ENCODE measurements at regions of chr7 and their contacts with region 1.

Region 1: GRCh38 chr7:16564909-16565426 is 38.3 kb downstream of the LRRC72 start:
- DNase-seq: peak; percentile 53
- H3K4me3 Mint-ChIP-seq: no peak overlapping the region
- H3K27ac Mint-ChIP-seq: no peak overlapping the region
- H3K4me1 Mint-ChIP-seq: no peaks in the 10 kb centered on the region
- H3K27me3 Mint-ChIP-seq: peaks cover 12% of the 10 kb centered on the region
- CTCF ChIP-seq: peak; percentile 54

Region 2: DNA sequence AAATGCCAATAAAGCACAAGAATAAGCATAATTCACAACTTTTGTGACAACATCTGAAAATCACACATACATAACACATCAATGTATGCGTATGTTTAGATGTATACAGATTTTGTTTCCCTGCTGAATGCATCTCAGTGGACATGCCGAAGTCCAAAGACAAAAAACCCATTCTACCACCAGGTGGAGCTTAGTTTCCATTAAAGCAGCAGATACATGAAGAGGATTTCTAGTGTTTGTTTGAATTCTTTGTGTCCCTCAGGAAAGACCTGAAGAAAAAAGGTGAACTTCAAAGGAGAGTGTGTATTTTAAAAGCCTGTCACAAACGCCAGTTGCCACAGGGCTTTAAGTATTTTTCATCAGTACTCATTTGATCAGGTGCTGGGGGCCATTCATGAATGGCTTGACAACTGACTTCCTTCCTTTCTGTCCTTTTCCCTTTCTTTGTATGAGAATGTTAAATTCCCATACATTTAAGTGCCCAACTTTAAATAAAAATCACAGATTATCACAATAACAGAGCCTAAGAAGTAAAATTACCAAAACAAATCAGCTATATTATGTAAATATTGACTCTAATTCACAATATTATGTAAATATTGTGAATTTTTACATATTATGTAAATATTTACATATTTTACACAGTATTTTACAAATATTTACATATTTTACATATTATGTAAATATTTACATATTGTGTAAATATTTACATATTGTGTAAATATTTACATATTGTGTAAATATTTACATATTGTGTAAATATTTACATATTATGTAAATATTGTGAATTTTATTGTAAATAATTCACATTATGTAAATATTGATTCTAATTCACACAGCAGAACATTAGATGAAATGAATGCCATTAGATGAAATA is 486.7 kb before region 1 on chr7:
- CTCF ChIA-PET with region 1: interaction called, 78 read pairs
- POLR2A ChIA-PET with region 1: interaction called, 6 read pairs
- intact Hi-C with region 1: loop called (anchors 1 kb)
- DNase-seq: peak; percentile 75
- H3K4me3 Mint-ChIP-seq: no peak overlapping the region
- H3K27ac Mint-ChIP-seq: no peak overlapping the region
- H3K4me1 Mint-ChIP-seq: peaks cover 11% of the 10 kb centered on the region
- H3K27me3 Mint-ChIP-seq: no peaks in the 10 kb centered on the region
- CTCF ChIP-seq: peak; percentile 56

Region 3: GRCh38 chr7:16114633-16115032 is 450.3 kb before region 1 on chr7:
- CTCF ChIA-PET with region 1: interaction called, 47 read pairs
- POLR2A ChIA-PET with region 1: no interaction called
- intact Hi-C with region 1: loop called (anchors 1 kb)
- DNase-seq: peak; percentile 39
- H3K4me3 Mint-ChIP-seq: no peak overlapping the region
- H3K27ac Mint-ChIP-seq: no peak overlapping the region
- H3K4me1 Mint-ChIP-seq: no peaks in the 10 kb centered on the region
- H3K27me3 Mint-ChIP-seq: no peaks in the 10 kb centered on the region
- CTCF ChIP-seq: peak; percentile 37

Region 4: DNA sequence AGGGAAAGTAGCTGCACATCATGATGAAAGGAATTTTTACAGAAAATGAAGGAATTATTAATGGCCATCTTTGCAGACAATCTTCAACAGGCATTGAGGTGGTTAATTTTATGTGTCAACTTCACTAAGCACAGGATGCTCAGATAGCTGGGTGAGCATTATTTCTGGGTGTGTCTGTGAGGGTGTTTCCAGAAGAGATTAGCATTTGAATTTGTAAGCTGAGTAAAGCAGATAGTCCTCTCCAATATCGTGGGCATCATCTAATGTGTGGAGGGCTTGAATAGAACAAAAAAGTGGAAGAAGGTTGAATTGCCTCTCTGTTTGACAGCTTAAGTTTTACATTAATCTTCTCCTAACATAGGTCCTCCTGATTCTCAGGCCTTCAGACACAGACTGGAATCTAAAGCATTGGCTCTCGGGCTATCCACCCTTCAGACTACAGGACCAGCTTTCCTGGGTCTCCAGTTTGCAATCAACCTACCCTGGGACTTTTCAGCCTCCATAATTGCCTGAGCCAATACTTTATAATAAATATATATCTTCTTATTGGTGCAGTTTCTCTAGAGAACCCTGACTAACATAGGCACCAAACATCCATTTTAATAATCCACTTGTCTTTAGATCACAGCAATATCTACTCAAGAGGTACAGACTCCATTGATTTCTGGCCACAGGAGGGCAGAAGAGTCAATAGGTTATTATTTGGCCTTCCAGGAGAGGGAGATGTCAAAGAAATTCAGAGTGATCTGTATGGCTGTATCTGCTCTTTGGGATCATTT is 133.1 kb before region 1 on chr7:
- CTCF ChIA-PET with region 1: interaction called, 49 read pairs
- POLR2A ChIA-PET with region 1: interaction called, 3 read pairs
- intact Hi-C with region 1: loop called (anchors 1 kb)
- DNase-seq: peak; percentile 62
- H3K4me3 Mint-ChIP-seq: no peak overlapping the region
- H3K27ac Mint-ChIP-seq: no peak overlapping the region
- H3K4me1 Mint-ChIP-seq: no peaks in the 10 kb centered on the region
- H3K27me3 Mint-ChIP-seq: no peaks in the 10 kb centered on the region
- CTCF ChIP-seq: peak; percentile 45

Region 5: GRCh38 chr7:16581286-16581685 is 16.3 kb after region 1 on chr7:
- CTCF ChIA-PET with region 1: interaction called, 12 read pairs
- POLR2A ChIA-PET with region 1: no interaction called
- intact Hi-C with region 1: no loop called
- DNase-seq: no peak
- H3K4me3 Mint-ChIP-seq: no peak overlapping the region
- H3K27ac Mint-ChIP-seq: no peak overlapping the region
- H3K4me1 Mint-ChIP-seq: no peaks in the 10 kb centered on the region
- H3K27me3 Mint-ChIP-seq: no peaks in the 10 kb centered on the region
- CTCF ChIP-seq: no peak

Measured in MCF 10A (cell line).